CD8-positive, alpha-beta T cell (primary cell): ENCODE measurements at regions of chr11 and their contacts with region 1.

Region 1: GRCh38 chr11:65506770-65507505 is 8.1 kb downstream of the MALAT1 start:
- DNase-seq: peak in 6 of 9 experiments; percentile 32 to 74 (median 62)
- ATAC-seq: peak; percentile 37
- H3K4me3 ChIP-seq: peak overlapping the region in 1 of 2 experiments; percentile 72
- H3K4me3 Mint-ChIP-seq: no peak overlapping the region
- H3K27ac ChIP-seq: peak overlapping the region; percentile 34 to 67
- H3K27ac Mint-ChIP-seq: peak overlapping the region; percentile 89
- H3K4me1 ChIP-seq: peaks cover 41% of the 10 kb centered on the region
- H3K4me1 Mint-ChIP-seq: peaks cover 51% of the 10 kb centered on the region
- H3K27me3 ChIP-seq: no peaks in the 10 kb centered on the region
- H3K27me3 Mint-ChIP-seq: no peaks in the 10 kb centered on the region
- CTCF ChIP-seq: no peak

Region 2: DNA sequence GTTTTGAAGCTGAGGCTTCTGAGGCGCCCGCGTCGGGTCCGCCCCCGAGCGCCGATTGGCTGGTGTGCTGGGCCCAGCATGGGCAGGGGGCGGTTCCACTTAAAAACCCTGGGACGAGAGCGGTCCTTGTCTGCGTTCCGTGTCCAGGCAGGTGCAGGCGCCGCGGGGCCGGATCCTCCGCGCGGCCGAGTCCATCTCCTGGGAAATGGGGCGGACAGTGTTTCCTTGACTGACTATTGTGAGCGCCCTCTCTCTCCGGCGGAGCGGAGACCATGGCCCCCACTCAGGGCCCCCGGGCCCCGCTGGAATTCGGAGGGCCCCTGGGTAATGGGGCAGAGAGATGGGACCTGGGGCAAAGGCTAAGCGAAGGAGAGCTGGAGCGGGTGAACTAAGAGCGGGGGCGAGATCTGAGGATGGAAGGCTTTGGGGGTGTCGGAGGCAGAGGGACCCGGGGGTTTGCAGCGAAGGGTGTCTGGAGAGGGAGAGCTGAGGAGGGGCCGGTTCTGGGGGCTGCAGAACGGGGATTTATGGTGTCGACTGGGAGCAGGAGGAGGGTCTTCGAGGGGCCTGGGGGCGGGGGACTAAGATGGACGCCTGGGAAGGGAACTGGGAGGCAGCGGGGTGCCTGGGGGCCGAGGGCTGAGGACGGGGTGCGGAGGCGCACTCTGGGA is 395.1 kb before region 1 on chr11 and contains the start of gene TM7SF2:
- CTCF ChIA-PET with region 1: no interaction called
- POLR2A ChIA-PET with region 1: no interaction called
- intact Hi-C with region 1: loop called in 1 of 2 experiments (anchors 5 kb)
- DNase-seq: peak; percentile 83 to 96 (median 95)
- ATAC-seq: peak; percentile 70
- H3K4me3 ChIP-seq: peak within 1 kb of the TSS; percentile 73 to 84
- H3K4me3 Mint-ChIP-seq: peak within 1 kb of the TSS; percentile 86
- H3K27ac ChIP-seq: peak within 1 kb of the TSS; percentile 67 to 74
- H3K27ac Mint-ChIP-seq: peak within 1 kb of the TSS; percentile 87
- H3K4me1 ChIP-seq: peaks cover 48% of the 10 kb centered on the region
- H3K4me1 Mint-ChIP-seq: peaks cover 38% of the 10 kb centered on the region
- H3K27me3 ChIP-seq: no peaks in the 10 kb centered on the region
- H3K27me3 Mint-ChIP-seq: no peaks in the 10 kb centered on the region
- CTCF ChIP-seq: no peak
- total RNA-seq, gene TM7SF2: 20.7 to 23.8 TPM

Region 3: DNA sequence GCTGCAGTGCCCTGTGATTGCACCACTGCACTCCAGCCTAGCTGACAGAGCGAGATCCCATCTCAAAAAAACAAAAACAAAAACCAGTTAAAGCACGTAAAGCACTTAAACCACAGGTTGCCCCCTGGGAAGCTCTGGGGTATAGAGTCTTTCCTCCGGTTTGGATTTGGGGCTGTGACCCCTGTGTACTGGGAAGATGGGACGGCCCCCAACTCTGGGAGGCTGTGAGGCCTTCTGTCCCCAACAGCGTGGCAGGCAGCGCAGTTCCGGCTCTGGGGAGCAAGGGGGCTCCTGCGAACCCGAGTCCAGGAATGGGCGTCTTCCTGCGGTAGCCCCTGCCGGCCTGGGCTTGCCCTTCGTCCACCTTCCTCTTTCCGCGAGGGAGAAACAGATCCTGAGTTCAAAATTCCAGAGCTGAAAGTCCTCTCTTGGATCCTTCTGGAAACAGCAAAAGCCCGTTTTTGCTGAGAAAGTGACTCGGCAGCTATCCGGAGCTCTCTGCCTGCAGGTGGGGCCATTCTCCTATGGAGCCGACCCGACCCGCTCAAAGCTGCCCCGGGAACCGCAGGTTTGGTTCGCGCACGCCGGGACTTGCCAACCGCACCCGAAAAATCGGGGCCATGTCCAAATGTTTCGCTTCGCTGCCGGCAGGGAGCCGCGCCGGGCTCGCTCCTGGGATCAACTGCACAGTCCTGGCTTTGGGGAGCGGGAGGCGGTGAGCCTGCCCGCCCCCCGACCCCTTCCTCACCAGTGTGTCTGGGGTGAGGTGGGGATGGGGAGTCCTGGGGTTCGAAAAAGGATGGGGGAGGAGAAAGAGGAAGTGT is 281.4 kb before region 1 on chr11:
- CTCF ChIA-PET with region 1: no interaction called
- POLR2A ChIA-PET with region 1: interaction called, 3 read pairs
- intact Hi-C with region 1: loop called in 1 of 2 experiments (anchors 2 kb)
- DNase-seq: peak in 8 of 9 experiments; percentile 41 to 74 (median 65)
- ATAC-seq: peak; percentile 92
- H3K4me3 ChIP-seq: peak overlapping the region; percentile 39 to 53
- H3K4me3 Mint-ChIP-seq: peak overlapping the region; percentile 74
- H3K27ac ChIP-seq: no peak overlapping the region
- H3K27ac Mint-ChIP-seq: no peak overlapping the region
- H3K4me1 ChIP-seq: peaks cover 13% of the 10 kb centered on the region
- H3K4me1 Mint-ChIP-seq: peaks cover 10% of the 10 kb centered on the region
- H3K27me3 ChIP-seq: peaks cover 0 to 12% of the 10 kb centered on the region in 2 experiments
- H3K27me3 Mint-ChIP-seq: peaks cover 8% of the 10 kb centered on the region
- CTCF ChIP-seq: peak; percentile 41

Region 4: DNA sequence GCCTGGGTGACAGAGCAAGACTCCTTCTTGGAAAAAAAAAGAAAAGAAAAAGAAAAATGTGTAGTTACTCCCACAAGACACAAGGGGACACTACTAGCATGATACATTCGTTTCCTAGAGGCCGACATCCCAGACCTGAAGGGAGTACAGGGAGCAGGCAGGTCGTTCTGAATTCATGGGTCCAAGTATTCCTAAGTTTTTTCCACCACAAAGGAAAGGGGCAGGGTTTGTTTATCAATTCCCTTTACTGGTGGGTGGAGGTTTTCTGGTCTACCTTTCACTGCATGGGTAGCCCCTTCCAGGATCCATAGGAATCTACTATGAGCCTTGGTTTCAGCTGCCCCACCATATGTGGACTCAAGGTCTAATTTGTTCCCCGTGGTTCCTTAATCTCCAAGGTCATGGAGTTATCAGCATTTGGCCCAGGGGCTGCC is 140.6 kb before region 1 on chr11:
- CTCF ChIA-PET with region 1: interaction called, 49 read pairs
- POLR2A ChIA-PET with region 1: interaction called, 5 read pairs
- intact Hi-C with region 1: loop called (anchors 1 kb)
- DNase-seq: peak in 3 of 9 experiments; percentile 31 to 80 (median 70)
- ATAC-seq: peak; percentile 92
- H3K4me3 ChIP-seq: no peak overlapping the region
- H3K4me3 Mint-ChIP-seq: no peak overlapping the region
- H3K27ac ChIP-seq: no peak overlapping the region
- H3K27ac Mint-ChIP-seq: no peak overlapping the region
- H3K4me1 ChIP-seq: peaks cover 6% of the 10 kb centered on the region
- H3K4me1 Mint-ChIP-seq: peaks cover 5% of the 10 kb centered on the region
- H3K27me3 ChIP-seq: no peaks in the 10 kb centered on the region
- H3K27me3 Mint-ChIP-seq: no peaks in the 10 kb centered on the region
- CTCF ChIP-seq: peak; percentile 81

Region 5: DNA sequence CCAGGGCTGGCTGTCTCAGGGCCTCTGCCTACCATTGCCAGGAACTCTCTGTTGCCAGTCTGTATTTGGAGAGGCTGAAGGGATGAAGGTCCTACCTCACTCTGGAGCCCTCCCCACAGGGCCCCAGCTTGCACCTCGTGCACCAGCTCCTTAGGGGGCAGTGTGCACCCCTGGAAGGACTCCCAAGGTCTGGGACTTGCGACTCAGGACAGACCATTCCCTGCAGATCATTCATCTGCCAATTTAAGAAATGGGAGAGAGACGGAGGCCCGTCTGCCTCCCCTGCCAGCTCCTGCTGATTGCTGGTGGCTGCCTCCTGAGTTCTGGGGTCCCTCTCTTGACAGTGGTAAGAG is 35.6 kb before region 1 on chr11:
- CTCF ChIA-PET with region 1: interaction called, 50 read pairs
- POLR2A ChIA-PET with region 1: interaction called, 506 read pairs
- intact Hi-C with region 1: no loop called
- DNase-seq: peak in 5 of 9 experiments; percentile 20 to 52 (median 36)
- ATAC-seq: peak; percentile 1
- H3K4me3 ChIP-seq: peak overlapping the region; percentile 11 to 42
- H3K4me3 Mint-ChIP-seq: no peak overlapping the region
- H3K27ac ChIP-seq: peak overlapping the region; percentile 60 to 87
- H3K27ac Mint-ChIP-seq: peak overlapping the region; percentile 98
- H3K4me1 ChIP-seq: peaks cover 17% of the 10 kb centered on the region
- H3K4me1 Mint-ChIP-seq: peaks cover 23% of the 10 kb centered on the region
- H3K27me3 ChIP-seq: no peaks in the 10 kb centered on the region
- H3K27me3 Mint-ChIP-seq: no peaks in the 10 kb centered on the region
- CTCF ChIP-seq: no peak

Region 6: DNA sequence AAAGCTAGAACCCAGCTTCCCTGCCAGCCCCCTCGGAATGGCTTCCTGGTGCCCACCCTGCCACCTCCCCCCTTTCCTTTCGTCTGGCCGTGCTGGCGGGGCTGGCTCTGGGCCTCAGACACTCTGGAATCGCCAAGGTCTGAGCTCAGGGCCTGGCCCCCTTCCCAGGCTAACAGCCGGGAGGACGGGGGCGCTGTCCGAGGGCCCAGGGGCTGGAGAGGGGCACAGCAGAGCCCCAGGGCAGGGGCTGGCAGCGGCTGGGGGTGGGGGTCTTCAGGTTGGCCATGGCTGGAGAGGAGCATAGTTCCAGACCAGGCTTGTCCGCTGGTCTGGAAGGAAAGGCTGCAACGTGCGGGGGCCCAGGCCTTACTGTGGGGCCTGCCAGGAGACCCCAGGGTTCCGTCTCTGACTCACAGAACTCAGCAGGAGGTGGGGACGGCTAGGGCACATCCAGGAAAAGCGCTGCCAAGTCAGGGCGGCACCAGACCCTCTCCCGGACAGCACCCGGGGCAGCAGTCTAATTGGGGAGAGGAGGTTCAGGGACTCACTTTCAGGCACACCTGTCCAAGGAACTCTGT is 52.1 kb after region 1 on chr11:
- CTCF ChIA-PET with region 1: no interaction called
- POLR2A ChIA-PET with region 1: no interaction called
- intact Hi-C with region 1: no loop called
- DNase-seq: peak in 1 of 9 experiments; percentile 8
- ATAC-seq: no peak
- H3K4me3 ChIP-seq: peak overlapping the region; percentile 51 to 61
- H3K4me3 Mint-ChIP-seq: peak overlapping the region; percentile 75
- H3K27ac ChIP-seq: peak overlapping the region; percentile 60 to 79
- H3K27ac Mint-ChIP-seq: peak overlapping the region; percentile 84
- H3K4me1 ChIP-seq: peaks cover 61% of the 10 kb centered on the region
- H3K4me1 Mint-ChIP-seq: peaks cover 58% of the 10 kb centered on the region
- H3K27me3 ChIP-seq: no peaks in the 10 kb centered on the region
- H3K27me3 Mint-ChIP-seq: no peaks in the 10 kb centered on the region
- CTCF ChIP-seq: no peak